Dorsolateral prefrontal cortex (tissue), 120 donors: ENCODE measurements at regions of chr2 and their contacts with region 1.

Region 1: DNA sequence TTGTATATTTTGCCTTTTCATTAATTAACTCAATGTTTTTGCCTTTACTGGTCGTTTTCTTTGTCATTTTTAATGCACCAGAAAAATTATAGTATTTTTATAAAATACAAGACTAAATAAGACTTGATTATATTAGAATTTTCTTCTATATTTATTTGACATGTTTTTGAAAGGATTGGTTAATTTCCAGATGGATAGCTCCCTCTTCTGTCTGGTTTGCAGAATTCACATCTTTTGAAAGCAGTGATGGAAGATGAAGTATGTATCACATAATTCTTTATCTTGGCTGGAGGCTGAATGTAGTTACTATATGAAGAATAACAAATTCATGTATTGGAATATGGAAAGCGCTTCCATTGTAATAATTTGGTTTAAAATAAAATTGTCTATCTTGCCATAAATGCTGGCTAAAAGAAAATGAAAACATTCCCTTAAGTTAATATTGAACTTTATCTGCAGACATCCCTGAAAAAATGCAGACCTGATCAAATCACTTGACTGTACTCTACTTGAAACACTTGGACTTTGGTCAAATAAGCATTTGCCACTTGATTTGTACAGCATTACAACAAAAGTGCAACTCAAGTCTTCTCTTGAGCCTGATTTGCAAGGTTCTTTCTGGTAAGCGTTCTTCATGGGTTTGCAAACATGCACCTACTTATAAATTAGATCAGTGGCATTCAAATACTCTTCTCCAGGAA is 86.3 kb upstream of the EFEMP1 start:
- DNase-seq: no peak
- H3K4me3 ChIP-seq: peak overlapping the region in 48 of 59 donors; percentile 5 to 56 (median 34)
- H3K27ac ChIP-seq: peak overlapping the region in 52 of 59 donors; percentile 7 to 92 (median 81)
- H3K27me3 ChIP-seq: no peaks in the 10 kb centered on the region
- CTCF ChIP-seq: peak; percentile 33 to 87 (median 70)

Region 2: DNA sequence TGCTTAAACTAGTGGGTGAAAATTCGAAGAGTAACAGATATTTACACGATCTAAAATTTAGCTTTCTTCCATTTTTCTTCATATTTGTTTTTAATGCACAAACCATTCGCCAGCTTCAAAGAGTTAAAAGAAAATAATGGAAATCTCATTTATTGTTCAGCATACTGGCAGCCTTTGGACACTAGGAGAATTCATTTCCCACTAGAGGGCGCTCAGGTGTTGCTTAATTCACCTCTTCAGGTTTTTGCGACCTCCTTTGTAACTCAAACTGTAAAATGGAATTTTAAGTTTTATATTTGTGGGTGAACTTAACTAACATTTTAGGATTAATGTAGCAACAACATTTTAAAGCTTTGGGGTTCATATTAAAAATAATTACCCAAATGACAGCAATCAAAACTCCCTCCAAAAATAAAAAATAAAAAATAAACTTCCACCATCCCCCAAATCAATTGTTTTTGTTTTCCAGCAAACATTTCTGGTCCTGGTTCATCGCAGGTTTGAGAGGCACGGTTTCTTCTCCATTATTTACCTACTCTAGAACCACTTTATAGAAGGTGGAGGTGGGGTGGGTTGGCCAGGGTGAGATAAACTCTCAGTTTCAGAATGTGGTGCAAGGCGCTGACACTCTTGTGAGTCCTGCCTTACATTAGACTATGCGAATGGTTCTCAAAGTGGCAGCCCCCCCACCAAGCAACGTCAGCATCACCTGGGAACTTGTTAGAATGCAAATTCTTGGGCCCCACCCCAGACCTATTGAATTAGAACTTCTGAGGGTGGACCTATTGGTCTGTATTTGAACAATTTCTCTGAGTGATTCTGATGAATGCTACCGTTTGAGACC is 291.5 kb before region 1 on chr2:
- intact Hi-C with region 1: loop called (anchors 2 to 5 kb)
- DNase-seq: peak in 4 of 10 donors; percentile 32 to 71 (median 50)
- H3K4me3 ChIP-seq: no peak overlapping the region
- H3K27ac ChIP-seq: no peak overlapping the region
- H3K27me3 ChIP-seq: peaks cover 0 to 4% (median 0%) of the 10 kb centered on the region in 45 donors
- CTCF ChIP-seq: peak; percentile 77 to 97 (median 88)

Region 3: GRCh38 chr2:55771612-55772011 is 238.3 kb before region 1 on chr2:
- intact Hi-C with region 1: loop called (anchors 5 to 10 kb)
- DNase-seq: no peak
- H3K4me3 ChIP-seq: no peak overlapping the region
- H3K27ac ChIP-seq: no peak overlapping the region
- H3K27me3 ChIP-seq: no peaks in the 10 kb centered on the region
- CTCF ChIP-seq: peak; percentile 37 to 83 (median 66)

Region 4: DNA sequence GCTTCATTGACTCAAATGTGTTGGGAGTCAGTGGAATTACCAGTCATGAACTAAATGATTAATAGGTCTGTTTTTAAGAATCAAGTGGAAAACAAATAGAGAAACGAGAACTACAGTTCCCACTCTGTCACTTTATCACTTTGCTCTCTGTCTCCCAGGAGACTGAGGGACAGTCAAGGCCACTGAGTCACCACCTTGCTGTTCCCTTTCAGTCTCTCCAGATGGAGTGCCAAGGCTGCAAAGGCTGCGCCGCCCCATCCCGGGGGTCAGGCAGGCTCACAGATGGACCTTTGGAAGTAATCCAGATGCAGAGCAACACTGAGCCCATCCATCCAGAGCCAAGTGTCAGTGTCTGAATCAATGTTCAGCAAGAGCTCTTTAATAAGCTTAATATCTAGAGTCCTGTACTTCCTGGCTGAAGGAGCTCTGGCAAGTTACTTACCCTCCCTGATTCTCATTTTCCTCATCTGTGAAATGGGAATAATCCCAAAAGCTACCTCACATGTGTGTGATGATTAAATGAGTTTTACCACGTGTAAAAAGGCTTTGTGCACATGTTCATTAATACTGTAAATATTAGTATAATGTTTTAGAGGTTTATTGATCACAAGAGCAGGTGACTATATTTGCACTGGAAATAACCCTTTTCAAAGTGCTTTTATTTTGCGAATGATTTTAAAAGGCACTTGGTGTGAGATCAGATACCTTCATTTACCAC is 43.3 kb before region 1 on chr2:
- intact Hi-C with region 1: loop called in 1 of 2 experiments (anchors 2 kb)
- DNase-seq: peak in 7 of 10 donors; percentile 12 to 49 (median 34)
- H3K4me3 ChIP-seq: no peak overlapping the region
- H3K27ac ChIP-seq: peak overlapping the region in 1 of 59 donors; percentile 40
- H3K27me3 ChIP-seq: peaks cover 0 to 6% (median 0%) of the 10 kb centered on the region in 45 donors
- CTCF ChIP-seq: peak in 17 of 56 donors; percentile 5 to 43 (median 18)

Region 5: GRCh38 chr2:56183643-56184499 is 174.0 kb after region 1 on chr2 and contains the start of gene CCDC85A:
- intact Hi-C with region 1: no loop called
- DNase-seq: peak; percentile 79 to 90 (median 84)
- H3K4me3 ChIP-seq: peak within 1 kb of the TSS; percentile 56 to 89 (median 75)
- H3K27ac ChIP-seq: peak within 1 kb of the TSS in 52 of 59 donors; percentile 19 to 87 (median 72)
- H3K27me3 ChIP-seq: peaks cover 0 to 4% (median 0%) of the 10 kb centered on the region in 45 donors
- CTCF ChIP-seq: peak; percentile 49 to 98 (median 94)
- total RNA-seq, gene CCDC85A: 14.7 to 52.9 (median 33.1) TPM